Caco-2 (cell line): ENCODE measurements at regions of chr11 and their contacts with region 1.

Region 1: GRCh38 chr11:35683728-35684339 is 21.3 kb downstream of the TRIM44 start:
- DNase-seq: no peak
- H3K4me3 ChIP-seq: no peak overlapping the region
- H3K4me3 Mint-ChIP-seq: no peak overlapping the region
- H3K27ac Mint-ChIP-seq: no peak overlapping the region
- H3K4me1 ChIP-seq: peaks cover 32% of the 10 kb centered on the region
- H3K4me1 Mint-ChIP-seq: peaks cover 32% of the 10 kb centered on the region
- H3K27me3 ChIP-seq: no peaks in the 10 kb centered on the region
- H3K27me3 Mint-ChIP-seq: no peaks in the 10 kb centered on the region
- CTCF ChIP-seq: no peak

Region 2: GRCh38 chr11:35313066-35313759 is 370.6 kb before region 1 on chr11:
- CTCF ChIA-PET with region 1: no interaction called
- POLR2A ChIA-PET with region 1: no interaction called
- intact Hi-C with region 1: no loop called
- DNase-seq: no peak
- H3K4me3 ChIP-seq: no peak overlapping the region
- H3K4me3 Mint-ChIP-seq: no peak overlapping the region
- H3K27ac Mint-ChIP-seq: no peak overlapping the region
- H3K4me1 ChIP-seq: no peaks in the 10 kb centered on the region
- H3K4me1 Mint-ChIP-seq: no peaks in the 10 kb centered on the region
- H3K27me3 ChIP-seq: no peaks in the 10 kb centered on the region
- H3K27me3 Mint-ChIP-seq: no peaks in the 10 kb centered on the region
- CTCF ChIP-seq: no peak

Region 3: GRCh38 chr11:35650006-35650405 is 33.8 kb before region 1 on chr11:
- CTCF ChIA-PET with region 1: no interaction called
- POLR2A ChIA-PET with region 1: no interaction called
- intact Hi-C with region 1: no loop called
- DNase-seq: no peak
- H3K4me3 ChIP-seq: no peak overlapping the region
- H3K4me3 Mint-ChIP-seq: no peak overlapping the region
- H3K27ac Mint-ChIP-seq: no peak overlapping the region
- H3K4me1 ChIP-seq: no peaks in the 10 kb centered on the region
- H3K4me1 Mint-ChIP-seq: no peaks in the 10 kb centered on the region
- H3K27me3 ChIP-seq: no peaks in the 10 kb centered on the region
- H3K27me3 Mint-ChIP-seq: peaks cover 6% of the 10 kb centered on the region
- CTCF ChIP-seq: no peak

Region 4: DNA sequence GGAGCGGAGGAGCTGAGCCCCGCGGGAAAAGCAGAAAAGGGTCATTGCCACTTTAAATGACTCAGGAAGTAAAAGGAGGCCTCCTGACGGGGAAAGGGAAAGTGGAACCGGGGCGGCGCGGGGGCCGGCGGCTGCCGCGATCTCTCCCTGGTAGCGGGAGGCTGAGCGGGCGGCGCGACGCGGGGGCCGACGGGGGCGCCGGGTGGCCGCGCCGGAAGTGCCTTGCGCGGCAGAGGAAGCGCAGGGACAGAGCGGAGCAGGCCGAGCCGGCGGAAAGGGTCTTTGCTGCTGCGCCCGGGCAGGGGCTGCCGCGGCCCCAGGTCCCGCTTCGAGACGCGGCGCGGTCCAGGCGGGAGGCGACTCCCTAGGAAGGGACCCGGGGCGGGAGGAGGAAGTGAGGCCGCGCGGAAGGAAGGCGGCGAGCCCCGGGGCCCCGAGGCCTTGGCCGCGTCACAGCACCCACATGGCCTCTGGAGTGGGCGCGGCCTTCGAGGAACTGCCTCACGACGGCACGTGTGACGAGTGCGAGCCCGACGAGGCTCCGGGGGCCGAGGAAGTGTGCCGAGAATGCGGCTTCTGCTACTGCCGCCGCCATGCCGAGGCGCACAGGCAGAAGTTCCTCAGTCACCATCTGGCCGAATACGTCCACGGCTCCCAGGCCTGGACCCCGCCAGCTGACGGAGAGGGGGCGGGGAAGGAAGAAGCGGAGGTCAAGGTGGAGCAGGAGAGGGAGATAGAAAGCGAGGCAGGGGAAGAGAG is 21.0 kb before region 1 on chr11 and contains the start of gene TRIM44:
- CTCF ChIA-PET with region 1: no interaction called
- POLR2A ChIA-PET with region 1: interaction called, 3 read pairs
- intact Hi-C with region 1: loop called (anchors 2 kb)
- DNase-seq: peak; percentile 90 to 91
- H3K4me3 ChIP-seq: peak within 1 kb of the TSS; percentile 76
- H3K4me3 Mint-ChIP-seq: peak within 1 kb of the TSS; percentile 93
- H3K27ac Mint-ChIP-seq: peak within 1 kb of the TSS; percentile 93
- H3K4me1 ChIP-seq: peaks cover 9% of the 10 kb centered on the region; the same call in 1 of the 2 replicates
- H3K4me1 Mint-ChIP-seq: peaks cover 12% of the 10 kb centered on the region
- H3K27me3 ChIP-seq: no peaks in the 10 kb centered on the region
- H3K27me3 Mint-ChIP-seq: no peaks in the 10 kb centered on the region
- CTCF ChIP-seq: no peak
- total RNA-seq, gene TRIM44: 74.6 and 81.4 TPM in 2 replicates

Region 5: DNA sequence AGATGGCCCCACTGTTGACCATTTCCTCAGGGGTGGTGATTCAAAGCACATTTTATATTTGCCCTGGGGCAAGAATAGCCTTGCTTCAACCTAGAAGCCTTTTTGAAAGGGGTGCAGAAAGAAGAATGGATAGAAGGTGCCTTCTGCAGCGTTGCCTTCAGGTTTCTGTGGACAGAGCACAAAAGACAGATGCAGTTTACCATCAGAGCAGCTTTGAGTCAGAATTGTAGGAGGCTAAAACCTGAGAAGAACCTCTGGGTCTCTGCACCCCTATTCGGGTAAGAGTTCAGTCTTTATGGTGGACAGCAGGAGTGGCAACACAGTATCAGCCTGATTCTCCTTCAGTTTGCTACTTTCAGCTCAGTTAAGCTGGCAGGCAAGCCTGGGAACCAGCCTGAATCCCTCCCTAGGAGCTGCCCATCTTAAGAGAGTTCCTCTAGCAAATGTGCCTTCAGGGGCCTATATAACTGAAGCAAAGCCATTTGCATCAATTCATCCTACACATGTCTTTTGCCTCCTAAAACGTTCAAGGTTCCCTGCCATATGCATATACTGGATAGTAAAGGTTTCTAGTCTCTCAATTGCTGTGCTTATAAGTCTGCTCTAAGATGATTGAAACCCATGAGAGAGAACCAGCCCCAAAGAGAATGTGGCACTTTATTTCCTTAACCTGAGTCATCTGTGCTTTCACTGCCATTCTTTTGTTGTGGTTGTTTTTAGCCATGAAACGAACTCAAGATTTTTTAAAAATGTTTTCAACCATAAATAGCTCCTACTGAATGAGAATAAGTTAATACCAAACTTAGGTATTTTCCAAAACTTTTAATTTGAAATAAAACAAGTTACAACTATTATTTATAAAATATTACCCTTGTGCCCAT is 101.7 kb after region 1 on chr11:
- CTCF ChIA-PET with region 1: no interaction called
- POLR2A ChIA-PET with region 1: no interaction called
- intact Hi-C with region 1: no loop called
- DNase-seq: peak in 1 of 2 experiments; percentile 21
- H3K4me3 ChIP-seq: no peak overlapping the region
- H3K4me3 Mint-ChIP-seq: no peak overlapping the region
- H3K27ac Mint-ChIP-seq: peak overlapping the region; percentile 64
- H3K4me1 ChIP-seq: peaks cover 33% of the 10 kb centered on the region
- H3K4me1 Mint-ChIP-seq: peaks cover 52% of the 10 kb centered on the region
- H3K27me3 ChIP-seq: no peaks in the 10 kb centered on the region
- H3K27me3 Mint-ChIP-seq: no peaks in the 10 kb centered on the region
- CTCF ChIP-seq: no peak